Activated CD4-positive, alpha-beta T cell treated with anti-CD3 and anti-CD28 coated beads for 36 hours (primary cell): ENCODE measurements at regions of chr18 and their contacts with region 1.

Region 1: GRCh38 chr18:77101410-77102258 is 30.9 kb downstream of the MBP start:
- DNase-seq: peak; percentile 79
- ATAC-seq: peak; percentile 49
- H3K4me3 Mint-ChIP-seq: peak overlapping the region; percentile 60
- H3K27ac Mint-ChIP-seq: peak overlapping the region; percentile 98
- H3K4me1 Mint-ChIP-seq: peaks cover 94% of the 10 kb centered on the region
- H3K27me3 Mint-ChIP-seq: no peaks in the 10 kb centered on the region

Region 2: DNA sequence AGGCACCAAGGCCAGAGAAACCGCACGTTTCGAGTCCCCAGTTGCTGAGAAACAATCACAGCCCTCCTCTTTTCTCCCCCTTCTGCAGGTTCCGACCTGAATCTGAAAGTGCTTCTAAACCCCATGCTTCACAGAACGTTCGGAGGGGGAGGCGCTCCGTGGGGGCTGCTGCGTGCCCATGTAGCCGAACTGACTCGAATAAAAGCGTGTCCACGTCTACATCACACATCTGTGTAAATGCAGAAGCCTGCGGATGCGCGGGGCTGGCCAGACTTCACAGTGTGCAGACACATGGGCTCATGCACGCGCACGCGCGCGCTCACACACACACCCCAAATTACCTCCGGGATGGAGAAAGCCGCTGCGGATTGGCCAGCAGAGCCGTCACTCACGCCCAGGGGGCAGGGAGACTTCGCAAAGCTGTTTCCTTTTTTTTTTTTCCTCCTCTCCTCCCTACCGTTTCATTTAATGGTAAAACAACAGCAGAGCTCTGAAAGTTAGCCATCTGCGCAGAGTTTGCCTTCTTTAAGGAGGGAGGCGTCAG is 608.9 kb before region 1 on chr18:
- CTCF ChIA-PET with region 1: no interaction called
- POLR2A ChIA-PET with region 1: no interaction called
- intact Hi-C with region 1: loop called in 1 of 2 experiments (anchors 5 kb)
- DNase-seq: peak; percentile 100
- ATAC-seq: peak; percentile 85
- H3K4me3 Mint-ChIP-seq: peak overlapping the region; percentile 87
- H3K27ac Mint-ChIP-seq: peak overlapping the region; percentile 89
- H3K4me1 Mint-ChIP-seq: peaks cover 36% of the 10 kb centered on the region
- H3K27me3 Mint-ChIP-seq: peaks cover 33% of the 10 kb centered on the region

Region 3: DNA sequence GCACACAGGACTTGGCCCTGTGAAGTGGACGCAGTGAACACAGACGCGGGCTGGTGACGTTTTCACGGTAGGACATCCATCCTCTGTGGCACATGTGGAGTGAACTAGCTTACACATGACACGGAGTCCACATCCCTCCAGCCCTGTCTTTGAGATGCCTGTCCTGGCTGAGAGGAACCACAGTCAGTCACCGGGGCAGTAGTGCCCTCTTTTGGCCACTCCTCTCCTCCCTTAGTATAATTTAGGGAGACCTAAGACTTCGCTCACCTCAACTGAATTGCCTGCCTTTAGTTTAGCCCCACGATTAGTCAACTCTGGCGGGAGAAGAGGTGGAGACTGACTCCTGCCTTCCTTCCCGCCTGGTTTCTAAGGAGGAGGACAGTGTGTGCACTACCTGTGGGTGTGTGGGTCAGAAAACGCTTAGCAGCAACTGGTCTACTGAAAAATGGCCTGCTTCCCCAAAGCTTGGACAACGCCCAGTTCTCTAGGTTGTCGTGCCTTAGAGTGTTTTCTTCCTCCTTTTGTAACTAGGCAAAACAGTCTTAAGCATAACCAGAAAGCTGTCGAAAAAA is 39.6 kb before region 1 on chr18:
- CTCF ChIA-PET with region 1: interaction called, 21 read pairs
- POLR2A ChIA-PET with region 1: interaction called, 48 read pairs
- intact Hi-C with region 1: loop called (anchors 1 kb)
- DNase-seq: peak; percentile 42
- ATAC-seq: peak; percentile 17
- H3K4me3 Mint-ChIP-seq: peak overlapping the region; percentile 47
- H3K27ac Mint-ChIP-seq: peak overlapping the region; percentile 98
- H3K4me1 Mint-ChIP-seq: peaks cover 83% of the 10 kb centered on the region
- H3K27me3 Mint-ChIP-seq: no peaks in the 10 kb centered on the region

Region 4: GRCh38 chr18:77124452-77124922 is 22.9 kb after region 1 on chr18:
- CTCF ChIA-PET with region 1: interaction called, 10 read pairs
- POLR2A ChIA-PET with region 1: interaction called, 13 read pairs
- intact Hi-C with region 1: loop called (anchors 1 kb)
- DNase-seq: peak; percentile 79
- ATAC-seq: peak; percentile 85
- H3K4me3 Mint-ChIP-seq: peak overlapping the region; percentile 63
- H3K27ac Mint-ChIP-seq: peak overlapping the region; percentile 94
- H3K4me1 Mint-ChIP-seq: peaks cover 93% of the 10 kb centered on the region
- H3K27me3 Mint-ChIP-seq: no peaks in the 10 kb centered on the region

Region 5: DNA sequence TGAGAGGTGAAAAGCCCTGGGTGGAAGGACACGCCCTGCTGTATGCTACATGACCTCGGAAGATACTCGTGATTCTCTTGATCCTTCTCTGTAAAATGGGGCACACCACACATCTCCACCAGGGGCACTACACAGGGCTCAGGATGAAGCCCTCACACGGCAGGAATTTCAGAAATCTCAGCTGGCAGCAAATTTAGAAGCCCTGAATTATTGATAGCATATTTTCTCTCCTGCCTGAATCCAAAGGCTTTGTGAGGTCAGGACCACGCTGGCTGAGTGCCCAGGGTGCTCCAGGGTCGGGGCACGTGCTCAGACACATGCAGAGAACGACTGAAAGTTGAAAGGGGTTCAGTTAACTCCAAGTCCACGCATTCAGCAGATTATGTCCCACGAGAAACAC is 105.9 kb after region 1 on chr18:
- CTCF ChIA-PET with region 1: interaction called, 4 read pairs
- POLR2A ChIA-PET with region 1: no interaction called
- intact Hi-C with region 1: loop called in 1 of 2 experiments (anchors 1 kb)
- DNase-seq: peak; percentile 69
- ATAC-seq: peak; percentile 84
- H3K4me3 Mint-ChIP-seq: no peak overlapping the region
- H3K27ac Mint-ChIP-seq: peak overlapping the region; percentile 73
- H3K4me1 Mint-ChIP-seq: peaks cover 44% of the 10 kb centered on the region
- H3K27me3 Mint-ChIP-seq: no peaks in the 10 kb centered on the region